Vagina (tissue), 2 donors: ENCODE measurements at regions of chr3 and their contacts with region 1.

Region 1: DNA sequence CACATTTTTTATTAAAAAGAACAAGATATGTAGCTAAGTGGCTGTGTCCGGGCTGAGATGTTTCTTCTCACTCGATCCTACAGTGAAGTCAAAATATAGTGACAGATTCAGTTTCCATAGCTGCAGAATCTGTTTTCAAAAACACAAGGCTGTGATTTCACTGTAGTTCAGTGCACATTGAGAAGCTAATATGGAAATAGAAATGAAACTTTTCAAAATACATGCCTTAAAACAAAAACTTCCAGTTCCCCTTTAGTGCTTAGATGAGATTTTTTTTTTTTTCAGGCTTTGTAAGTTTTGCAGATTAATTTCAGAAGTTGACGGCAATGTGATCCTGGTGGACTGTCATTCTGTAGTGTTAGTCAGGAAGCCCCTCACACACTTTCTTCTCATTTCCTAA is 23.8 kb upstream of the TRAK1 start:
- DNase-seq: no peak
- H3K4me3 ChIP-seq: no peak overlapping the region
- H3K27ac ChIP-seq: peak overlapping the region; percentile 75
- H3K4me1 ChIP-seq: peaks cover 74% of the 10 kb centered on the region
- H3K27me3 ChIP-seq: no peaks in the 10 kb centered on the region
- CTCF ChIP-seq: no peak
- POLR2A ChIP-seq: no peak

Region 2: GRCh38 chr3:42025370-42026138 is 41.8 kb before region 1 on chr3:
- intact Hi-C with region 1: loop called (anchors 5 kb)
- DNase-seq: peak in 1 of 2 donors; percentile 98
- H3K4me3 ChIP-seq: peak overlapping the region; percentile 4 to 8
- H3K27ac ChIP-seq: peak overlapping the region; percentile 79
- H3K4me1 ChIP-seq: peaks cover 65% of the 10 kb centered on the region
- H3K27me3 ChIP-seq: no peaks in the 10 kb centered on the region
- CTCF ChIP-seq: no peak
- POLR2A ChIP-seq: no peak